ENCODE measurements at regions of chr7 and their contacts with region 1.

Region 1: GRCh38 chr7:151244196-151244840 is 4.2 kb downstream of the SMARCD3 start:
- DNase-seq: peak; percentile 54 to 62 (median 57)
- H3K4me3 ChIP-seq: peak overlapping the region in 1 of 2 donors; percentile 34
- H3K4me3 Mint-ChIP-seq: peak overlapping the region; percentile 45 to 84 (median 77)
- H3K27ac ChIP-seq: no peak overlapping the region
- H3K27ac Mint-ChIP-seq: peak overlapping the region in 6 of 7 donors; percentile 35 to 92 (median 84)
- H3K4me1 ChIP-seq: peaks cover 54% of the 10 kb centered on the region
- H3K4me1 Mint-ChIP-seq: peaks cover 19 to 56% (median 31%) of the 10 kb centered on the region in 4 donors
- H3K27me3 ChIP-seq: peaks cover 16% of the 10 kb centered on the region
- H3K27me3 Mint-ChIP-seq: peaks cover 11 to 18% of the 10 kb centered on the region in 2 donors

Region 2: DNA sequence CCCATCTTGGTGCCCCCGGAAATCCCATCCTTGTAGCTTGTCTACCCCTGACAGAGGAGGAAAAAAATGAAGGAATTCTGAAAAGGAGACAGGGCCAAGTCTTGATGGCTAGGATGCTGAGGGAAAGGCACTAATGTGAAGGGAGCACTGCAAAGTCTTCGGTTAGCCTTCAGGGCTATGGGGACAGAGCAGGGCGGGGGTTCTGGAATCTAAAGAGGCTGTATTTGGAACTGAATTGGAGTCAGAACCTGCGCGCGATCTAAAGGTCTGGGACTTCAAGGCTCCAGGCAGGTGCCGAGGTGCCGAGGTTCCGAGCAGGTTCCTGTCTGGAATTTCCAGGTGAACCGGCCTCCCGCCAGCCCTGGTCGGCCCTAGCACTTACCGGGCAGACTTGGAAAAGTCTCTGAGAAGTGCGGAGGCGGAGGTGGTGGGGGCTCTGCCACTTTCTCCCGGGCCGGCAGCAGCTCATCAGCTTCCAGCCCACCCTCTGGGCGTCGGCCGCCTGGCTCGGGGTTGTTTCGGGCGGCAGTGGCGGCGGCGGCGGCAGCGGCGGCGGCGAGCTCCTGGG is 77.6 kb before region 1 on chr7:
- CTCF ChIA-PET with region 1: interaction called, 20 read pairs
- POLR2A ChIA-PET with region 1: interaction called, 3 read pairs
- intact Hi-C with region 1: no loop called
- DNase-seq: no peak
- H3K4me3 ChIP-seq: no peak overlapping the region
- H3K4me3 Mint-ChIP-seq: peak overlapping the region; percentile 39 to 73 (median 63)
- H3K27ac ChIP-seq: no peak overlapping the region
- H3K27ac Mint-ChIP-seq: no peak overlapping the region
- H3K4me1 ChIP-seq: peaks cover 6% of the 10 kb centered on the region
- H3K4me1 Mint-ChIP-seq: peaks cover 4 to 14% (median 9%) of the 10 kb centered on the region in 4 donors
- H3K27me3 ChIP-seq: peaks cover 33% of the 10 kb centered on the region
- H3K27me3 Mint-ChIP-seq: peaks cover 17 to 28% of the 10 kb centered on the region in 2 donors

Region 3: DNA sequence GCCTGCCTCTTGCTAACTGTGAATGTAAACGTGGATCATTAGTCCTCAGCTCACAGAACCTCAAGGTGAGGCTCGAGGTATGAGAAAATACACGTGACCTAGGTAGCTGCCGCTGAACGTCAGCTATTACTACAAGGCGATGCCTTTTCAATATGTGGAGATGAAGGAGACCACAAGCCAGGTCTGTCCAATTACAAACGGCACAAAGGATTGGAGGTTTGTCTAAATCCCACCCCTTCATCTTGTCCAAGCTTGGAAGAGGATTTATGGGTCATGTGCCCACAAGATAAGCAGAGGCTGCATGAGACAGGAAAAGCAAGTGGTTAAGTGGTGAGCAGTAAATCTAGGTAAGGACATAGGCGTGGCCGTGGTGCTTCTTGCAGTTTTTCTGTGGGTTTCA is 37.4 kb before region 1 on chr7:
- CTCF ChIA-PET with region 1: interaction called, 26 read pairs
- POLR2A ChIA-PET with region 1: interaction called, 8 read pairs
- intact Hi-C with region 1: loop called (anchors 5 kb)
- DNase-seq: peak; percentile 71 to 83 (median 81)
- H3K4me3 ChIP-seq: no peak overlapping the region
- H3K4me3 Mint-ChIP-seq: peak overlapping the region; percentile 52 to 89 (median 78)
- H3K27ac ChIP-seq: peak overlapping the region; percentile 57
- H3K27ac Mint-ChIP-seq: peak overlapping the region; percentile 82 to 99 (median 98)
- H3K4me1 ChIP-seq: peaks cover 37% of the 10 kb centered on the region
- H3K4me1 Mint-ChIP-seq: peaks cover 27 to 56% (median 40%) of the 10 kb centered on the region in 4 donors
- H3K27me3 ChIP-seq: no peaks in the 10 kb centered on the region
- H3K27me3 Mint-ChIP-seq: no peaks in the 10 kb centered on the region

Region 4: DNA sequence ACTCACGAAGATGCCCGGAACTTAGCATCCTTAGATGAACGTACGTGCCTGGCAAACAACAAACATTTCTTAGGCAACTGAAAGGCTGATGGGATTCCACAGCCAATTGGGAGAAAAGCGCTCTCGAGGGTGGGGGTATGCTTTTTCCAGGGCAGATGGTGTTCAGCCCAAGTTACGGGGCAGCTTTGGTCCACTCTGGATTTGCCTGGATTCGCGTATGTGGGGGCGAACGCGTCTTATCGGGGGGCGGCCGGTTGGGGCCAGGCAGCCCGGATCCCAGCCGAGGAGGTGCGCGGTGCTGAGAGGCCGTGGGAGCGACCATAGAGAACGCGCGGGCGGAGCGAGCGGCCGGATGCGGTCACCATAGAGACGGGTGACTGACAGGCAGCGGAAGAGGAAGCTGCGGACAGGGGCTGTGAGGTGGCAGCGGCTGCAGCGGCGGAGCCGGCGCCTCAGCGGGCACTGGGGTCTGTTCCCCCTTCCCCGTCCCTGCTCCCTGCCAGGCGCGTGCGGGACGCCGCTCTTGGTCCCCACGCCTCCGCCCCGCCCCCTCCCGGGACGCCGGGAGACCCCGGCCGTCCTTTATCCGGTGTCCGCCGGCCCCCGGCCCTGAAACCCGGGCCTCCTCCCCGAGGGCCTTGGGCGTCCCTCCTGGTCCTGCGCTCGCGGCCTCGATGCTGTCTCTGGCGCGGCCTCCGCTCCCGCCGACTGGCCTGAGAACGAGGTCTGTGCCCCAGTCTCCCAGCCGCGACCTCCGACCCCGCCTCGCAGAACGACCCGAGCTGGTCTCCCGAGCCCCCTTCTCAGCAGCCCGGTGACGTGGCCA is 12.0 kb before region 1 on chr7 and contains the start of gene CHPF2:
- CTCF ChIA-PET with region 1: interaction called, 33 read pairs
- POLR2A ChIA-PET with region 1: interaction called, 50 read pairs
- intact Hi-C with region 1: loop called (anchors 1 kb)
- DNase-seq: peak; percentile 83 to 90 (median 87)
- H3K4me3 ChIP-seq: peak within 1 kb of the TSS; percentile 75 to 94
- H3K4me3 Mint-ChIP-seq: peak within 1 kb of the TSS; percentile 98 to 100 (median 99)
- H3K27ac ChIP-seq: peak within 1 kb of the TSS; percentile 85
- H3K27ac Mint-ChIP-seq: peak within 1 kb of the TSS; percentile 95 to 99 (median 98)
- H3K4me1 ChIP-seq: peaks cover 38% of the 10 kb centered on the region
- H3K4me1 Mint-ChIP-seq: peaks cover 18 to 55% (median 33%) of the 10 kb centered on the region in 4 donors
- H3K27me3 ChIP-seq: no peaks in the 10 kb centered on the region
- H3K27me3 Mint-ChIP-seq: no peaks in the 10 kb centered on the region
- total RNA-seq, gene CHPF2: 52.2 to 52.3 TPM

Region 5: GRCh38 chr7:151304856-151305255 is 60.5 kb after region 1 on chr7:
- CTCF ChIA-PET with region 1: interaction called, 6 read pairs
- POLR2A ChIA-PET with region 1: no interaction called
- intact Hi-C with region 1: loop called (anchors 2 kb)
- DNase-seq: no peak
- H3K4me3 ChIP-seq: no peak overlapping the region
- H3K4me3 Mint-ChIP-seq: peak overlapping the region in 6 of 8 donors; percentile 35 to 71 (median 56)
- H3K27ac ChIP-seq: no peak overlapping the region
- H3K27ac Mint-ChIP-seq: peak overlapping the region in 2 of 7 donors; percentile 41 to 69
- H3K4me1 ChIP-seq: peaks cover 5% of the 10 kb centered on the region
- H3K4me1 Mint-ChIP-seq: peaks cover 3 to 12% (median 8%) of the 10 kb centered on the region in 4 donors
- H3K27me3 ChIP-seq: peaks cover 7% of the 10 kb centered on the region
- H3K27me3 Mint-ChIP-seq: peaks cover 23 to 31% of the 10 kb centered on the region in 2 donors